Activated T-helper 1 cell treated with anti-CD3 and anti-CD28 coated beads, Interleukin-12 subunit alpha, Interleukin-12 subunit beta, Interleukin-2, Interleukin-4 antibody, amounts not matched to agents 30 ng/mL and 10 ng/mL and 1 ng/mL, durations not matched to agents 14 hours and 24 hours and 36 hours (primary cell): ENCODE measurements at regions of chr1 and their contacts with region 1.

Region 1: DNA sequence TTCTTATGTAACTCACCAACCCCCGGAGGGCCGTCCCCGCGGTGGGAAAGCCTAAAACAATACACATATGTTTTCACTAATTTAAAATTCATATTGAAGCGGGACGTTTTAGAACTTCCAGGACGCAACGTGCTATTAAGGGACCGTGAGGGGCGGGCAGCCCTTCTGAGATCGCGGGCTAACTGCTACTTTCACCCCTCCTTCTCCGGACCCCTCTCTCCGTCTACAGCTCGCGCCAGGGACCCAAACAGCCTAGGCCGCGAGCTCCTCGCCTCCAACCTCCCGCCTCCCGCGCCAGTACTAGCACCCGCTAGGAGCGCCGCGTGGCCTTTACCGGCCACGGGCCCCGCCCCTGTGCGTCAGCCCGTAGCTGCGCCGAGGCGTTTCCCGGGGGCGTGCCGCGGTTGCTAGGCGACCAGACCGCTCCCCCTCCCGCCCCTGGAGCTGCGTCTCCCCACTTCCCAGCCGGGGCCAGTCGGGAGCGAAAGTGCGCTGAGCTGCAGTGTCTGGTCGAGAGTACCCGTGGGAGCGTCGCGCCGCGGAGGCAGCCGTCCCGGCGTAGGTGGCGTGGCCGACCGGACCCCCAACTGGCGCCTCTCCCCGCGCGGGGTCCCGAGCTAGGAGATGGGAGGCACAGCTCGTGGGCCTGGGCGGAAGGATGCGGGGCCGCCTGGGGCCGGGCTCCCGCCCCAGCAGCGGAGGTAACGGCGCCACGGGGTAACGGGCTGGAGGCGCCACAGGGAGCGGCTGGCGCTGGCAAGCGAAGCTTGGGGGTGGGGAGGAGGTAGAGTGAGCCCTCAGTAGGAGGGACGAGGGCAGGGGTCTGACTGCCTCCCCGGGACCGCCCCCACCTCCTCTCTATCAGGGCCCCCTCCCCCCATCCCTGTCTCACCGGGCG is at the start of gene DYRK3:
- DNase-seq: peak; percentile 95
- H3K4me3 Mint-ChIP-seq: peak within 1 kb of the TSS; percentile 89
- H3K27ac Mint-ChIP-seq: peak within 1 kb of the TSS; percentile 95
- H3K4me1 Mint-ChIP-seq: peaks cover 38% of the 10 kb centered on the region
- H3K27me3 Mint-ChIP-seq: peaks cover 7% of the 10 kb centered on the region
- total RNA-seq, gene DYRK3: 22.1 and 23.3 TPM in 2 replicates

Region 2: DNA sequence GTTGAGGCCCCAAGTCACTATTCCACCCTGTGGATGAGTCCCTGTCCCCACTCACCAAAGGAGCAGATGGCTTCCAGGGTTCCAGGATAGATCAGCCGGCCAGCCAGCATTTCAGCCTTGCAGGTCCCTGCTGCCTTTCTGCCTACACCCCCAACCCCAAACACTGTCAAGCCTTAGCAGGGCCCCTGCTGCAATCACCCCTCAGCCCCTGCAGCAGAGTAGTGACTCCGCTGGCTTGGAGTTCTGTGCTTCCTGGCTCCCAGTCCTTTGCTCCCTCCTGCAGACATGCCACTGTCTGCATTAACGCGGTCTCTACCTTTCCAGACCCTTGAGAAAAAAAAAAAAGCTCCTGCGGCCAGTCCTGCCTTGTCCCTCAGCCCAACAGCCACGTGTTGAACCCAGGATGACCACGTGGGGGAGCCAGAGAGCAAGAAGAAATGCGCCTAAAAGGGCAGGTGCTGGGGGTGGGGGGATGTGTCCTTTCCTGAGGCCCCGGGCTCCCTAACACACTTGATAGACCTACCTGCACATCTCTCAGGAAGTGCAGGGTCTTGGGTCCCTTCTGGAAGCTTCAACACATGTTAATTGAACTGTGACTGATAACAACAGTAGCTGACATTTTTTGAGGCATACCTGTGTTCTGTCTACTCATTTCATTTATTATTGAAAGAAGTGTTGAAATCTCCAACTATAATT is 90.6 kb before region 1 on chr1:
- intact Hi-C with region 1: no loop called
- DNase-seq: peak; percentile 69
- H3K4me3 Mint-ChIP-seq: no peak overlapping the region
- H3K27ac Mint-ChIP-seq: peak overlapping the region; percentile 22
- H3K4me1 Mint-ChIP-seq: peaks cover 33% of the 10 kb centered on the region
- H3K27me3 Mint-ChIP-seq: peaks cover 2% of the 10 kb centered on the region

Region 3: GRCh38 chr1:206651958-206652890 is 16.9 kb after region 1 on chr1:
- intact Hi-C with region 1: loop called (anchors 1 kb)
- DNase-seq: no peak
- H3K4me3 Mint-ChIP-seq: no peak overlapping the region
- H3K27ac Mint-ChIP-seq: no peak overlapping the region
- H3K4me1 Mint-ChIP-seq: peaks cover 4% of the 10 kb centered on the region
- H3K27me3 Mint-ChIP-seq: no peaks in the 10 kb centered on the region

Region 4: GRCh38 chr1:206925106-206925736 is 289.9 kb after region 1 on chr1:
- intact Hi-C with region 1: loop called (anchors 2 kb)
- DNase-seq: peak; percentile 36
- H3K4me3 Mint-ChIP-seq: no peak overlapping the region
- H3K27ac Mint-ChIP-seq: no peak overlapping the region
- H3K4me1 Mint-ChIP-seq: peaks cover 13% of the 10 kb centered on the region
- H3K27me3 Mint-ChIP-seq: no peaks in the 10 kb centered on the region

Region 5: DNA sequence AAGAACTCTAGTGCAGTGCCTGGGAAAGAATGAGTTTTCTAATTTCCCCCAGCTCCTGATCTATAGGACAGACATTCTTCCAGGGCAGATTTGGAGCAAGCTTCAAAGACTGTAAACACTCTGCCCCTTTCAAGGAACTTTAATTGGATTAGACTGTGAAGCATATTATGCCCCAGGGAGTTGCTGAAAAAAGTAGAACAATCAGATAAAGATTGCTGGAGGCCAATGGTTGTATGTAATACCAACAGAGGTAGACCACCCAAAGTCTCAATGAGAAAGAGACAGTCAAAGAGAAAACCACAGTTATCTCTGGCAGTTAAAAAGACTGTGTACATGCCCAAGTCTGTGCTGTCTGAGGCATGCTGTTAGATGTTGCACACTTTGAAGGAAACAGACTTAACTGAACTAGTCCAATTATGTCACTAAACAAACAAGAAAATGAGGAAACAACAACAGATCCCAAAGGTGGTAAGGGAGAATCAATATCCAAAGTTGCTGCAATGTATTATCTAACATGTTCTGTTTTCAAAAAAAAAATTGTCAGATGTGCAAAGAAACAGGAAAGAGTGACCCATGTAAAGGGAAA is 493.1 kb after region 1 on chr1:
- intact Hi-C with region 1: no loop called
- DNase-seq: no peak
- H3K4me3 Mint-ChIP-seq: no peak overlapping the region
- H3K27ac Mint-ChIP-seq: no peak overlapping the region
- H3K4me1 Mint-ChIP-seq: no peaks in the 10 kb centered on the region
- H3K27me3 Mint-ChIP-seq: peaks cover 9% of the 10 kb centered on the region